Heart right ventricle (tissue), 16 donors: ENCODE measurements at regions of chr2 and their contacts with region 1.

Region 1: GRCh38 chr2:100381240-100381639 is 36.2 kb downstream of the CHST10 start:
- DNase-seq: peak; percentile 36 to 79
- ATAC-seq: peak; percentile 38 to 78 (median 67)
- H3K4me3 ChIP-seq: no peak overlapping the region
- H3K27ac ChIP-seq: no peak overlapping the region
- H3K4me1 ChIP-seq: no peaks in the 10 kb centered on the region
- H3K27me3 ChIP-seq: no peaks in the 10 kb centered on the region
- CTCF ChIP-seq: peak; percentile 68 to 90 (median 86)

Region 2: GRCh38 chr2:100262555-100263320 is 118.5 kb before region 1 on chr2:
- intact Hi-C with region 1: loop called (anchors 1 to 5 kb)
- DNase-seq: peak; percentile 65 to 67
- ATAC-seq: peak in 7 of 8 donors; percentile 56 to 80 (median 59)
- H3K4me3 ChIP-seq: no peak overlapping the region
- H3K27ac ChIP-seq: no peak overlapping the region
- H3K4me1 ChIP-seq: peaks cover 0 to 18% (median 0%) of the 10 kb centered on the region in 9 donors
- H3K27me3 ChIP-seq: peaks cover 0 to 9% (median 0%) of the 10 kb centered on the region in 7 donors
- CTCF ChIP-seq: peak; percentile 92 to 99 (median 98)

Region 3: GRCh38 chr2:100309973-100310719 is 71.1 kb before region 1 on chr2:
- intact Hi-C with region 1: no loop called
- DNase-seq: no peak
- ATAC-seq: peak in 1 of 8 donors; percentile 45
- H3K4me3 ChIP-seq: no peak overlapping the region
- H3K27ac ChIP-seq: no peak overlapping the region
- H3K4me1 ChIP-seq: peaks cover 0 to 13% (median 2%) of the 10 kb centered on the region in 9 donors
- H3K27me3 ChIP-seq: no peaks in the 10 kb centered on the region
- CTCF ChIP-seq: no peak

Region 4: DNA sequence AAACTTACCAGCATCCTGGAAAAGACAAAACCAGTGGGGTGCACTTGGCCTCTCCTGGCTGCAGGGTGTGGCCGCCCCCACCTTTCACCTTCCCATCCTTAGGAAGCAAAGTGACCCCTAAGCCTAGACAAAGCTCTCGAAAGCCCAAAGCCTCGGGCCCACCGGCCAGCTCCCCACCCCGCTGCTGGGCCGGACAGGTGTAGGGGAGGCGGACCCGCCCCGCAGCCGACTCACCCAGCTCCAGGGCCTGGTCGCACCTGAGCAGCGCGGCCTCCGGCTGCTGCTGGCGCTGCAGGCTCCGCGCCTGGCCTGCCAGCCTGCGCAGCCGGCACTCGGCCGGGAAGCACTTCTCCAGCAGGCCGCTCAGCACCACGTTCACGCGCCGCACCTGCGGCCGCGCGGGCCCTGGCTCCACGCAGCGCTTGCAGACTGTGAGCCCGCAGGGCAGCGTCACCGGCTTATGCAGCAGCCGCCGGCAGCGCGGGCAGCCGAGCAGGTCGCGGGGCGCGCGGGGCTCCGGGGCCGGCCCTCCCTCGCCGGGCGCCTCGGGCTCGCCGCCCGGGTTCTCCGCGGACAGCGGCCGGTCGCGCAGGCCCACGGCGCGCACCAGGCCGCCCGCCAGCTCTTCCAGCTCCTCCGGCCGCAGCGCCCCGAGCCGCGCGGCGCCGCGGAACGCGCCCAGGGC is 59.9 kb before region 1 on chr2:
- intact Hi-C with region 1: loop called in 1 of 10 experiments (anchors 5 kb)
- DNase-seq: peak; percentile 5 to 31
- ATAC-seq: peak; percentile 46 to 81 (median 70)
- H3K4me3 ChIP-seq: peak overlapping the region; percentile 26 to 68 (median 61)
- H3K27ac ChIP-seq: peak overlapping the region; percentile 41 to 81 (median 76)
- H3K4me1 ChIP-seq: peaks cover 0 to 21% (median 8%) of the 10 kb centered on the region in 9 donors
- H3K27me3 ChIP-seq: peaks cover 0 to 75% (median 23%) of the 10 kb centered on the region in 7 donors
- CTCF ChIP-seq: peak in 6 of 9 donors; percentile 14 to 48 (median 36)